ENCODE measurements at regions of chr11 and their contacts with region 1.

Region 1: GRCh38 chr11:126310228-126310991 is 6.5 kb downstream of the DCPS start:
- DNase-seq: peak; percentile 74 to 79
- ATAC-seq: peak; percentile 91 to 95 (median 92)
- H3K4me3 ChIP-seq: no peak overlapping the region
- H3K27ac ChIP-seq: peak overlapping the region in 3 of 10 donors; percentile 3 to 71 (median 27)
- H3K4me1 ChIP-seq: peaks cover 0 to 40% (median 7%) of the 10 kb centered on the region in 9 donors
- H3K27me3 ChIP-seq: no peaks in the 10 kb centered on the region
- CTCF ChIP-seq: peak; percentile 83 to 97 (median 90)

Region 2: GRCh38 chr11:126072141-126072741 is 238.2 kb before region 1 on chr11:
- intact Hi-C with region 1: no loop called
- DNase-seq: no peak
- ATAC-seq: no peak
- H3K4me3 ChIP-seq: no peak overlapping the region
- H3K27ac ChIP-seq: no peak overlapping the region
- H3K4me1 ChIP-seq: no peaks in the 10 kb centered on the region
- H3K27me3 ChIP-seq: peaks cover 0 to 6% (median 0%) of the 10 kb centered on the region in 7 donors
- CTCF ChIP-seq: no peak

Region 3: GRCh38 chr11:126391970-126392639 is 81.7 kb after region 1 on chr11:
- intact Hi-C with region 1: loop called in 3 of 10 experiments (anchors 2 to 5 kb)
- DNase-seq: peak in 1 of 2 donors; percentile 56
- ATAC-seq: peak; percentile 41 to 67 (median 54)
- H3K4me3 ChIP-seq: peak overlapping the region in 2 of 10 donors; percentile 3 to 17
- H3K27ac ChIP-seq: peak overlapping the region; percentile 40 to 87 (median 80)
- H3K4me1 ChIP-seq: peaks cover 16 to 83% (median 58%) of the 10 kb centered on the region in 9 donors
- H3K27me3 ChIP-seq: no peaks in the 10 kb centered on the region
- CTCF ChIP-seq: peak in 6 of 9 donors; percentile 29 to 58 (median 39)

Region 4: GRCh38 chr11:126431401-126432064 is 121.1 kb after region 1 on chr11:
- intact Hi-C with region 1: loop called in 7 of 10 experiments (anchors 5 to 10 kb)
- DNase-seq: peak; percentile 57 to 64
- ATAC-seq: peak; percentile 52 to 84 (median 74)
- H3K4me3 ChIP-seq: no peak overlapping the region
- H3K27ac ChIP-seq: peak overlapping the region; percentile 43 to 87 (median 72)
- H3K4me1 ChIP-seq: peaks cover 12 to 74% (median 30%) of the 10 kb centered on the region in 9 donors
- H3K27me3 ChIP-seq: no peaks in the 10 kb centered on the region
- CTCF ChIP-seq: no peak

Region 5: DNA sequence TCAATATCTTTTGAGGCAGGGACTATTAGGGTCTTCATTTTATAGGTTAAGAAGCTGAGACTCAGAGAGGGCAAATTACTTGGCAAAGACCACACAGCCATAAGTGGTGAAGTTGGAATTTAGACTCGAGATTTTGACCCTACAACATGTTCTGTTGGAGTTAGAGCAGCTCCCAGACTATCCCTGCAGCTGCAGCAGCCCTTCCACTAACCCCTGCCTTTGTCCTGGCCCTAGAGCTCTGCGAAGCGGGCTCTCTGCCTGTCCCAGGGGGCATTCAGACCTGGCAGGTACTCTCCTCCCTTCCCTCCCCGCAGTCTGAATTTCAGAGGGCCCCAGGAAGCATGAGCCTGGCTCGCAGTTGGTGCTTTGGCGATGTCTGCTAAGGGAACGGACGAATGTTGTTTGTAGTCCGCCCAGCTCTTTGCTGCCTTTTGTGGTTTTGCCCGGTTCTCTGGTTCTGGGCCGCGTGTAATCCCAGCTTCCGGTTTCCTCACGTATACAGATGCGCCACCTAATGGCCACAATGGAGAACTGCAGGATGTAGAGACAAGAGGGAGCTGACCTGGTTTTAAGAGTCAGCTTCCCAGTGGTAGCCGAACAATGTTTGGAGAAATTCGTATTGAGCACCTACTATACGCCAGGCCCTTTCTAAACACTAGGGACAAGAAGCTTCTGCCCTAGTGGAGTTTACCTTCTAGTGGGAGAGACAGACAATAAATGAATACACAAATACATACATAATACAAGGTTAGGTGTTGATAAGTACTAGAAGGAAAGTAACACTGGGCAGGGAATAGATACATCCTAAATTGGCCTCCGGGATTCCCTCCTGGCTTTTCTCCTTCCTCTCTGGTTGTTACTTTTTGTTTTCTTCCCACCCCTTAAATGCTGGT is 170.2 kb after region 1 on chr11:
- intact Hi-C with region 1: loop called (anchors 1 to 5 kb)
- DNase-seq: peak; percentile 68 to 87
- ATAC-seq: peak; percentile 80 to 91 (median 88)
- H3K4me3 ChIP-seq: peak overlapping the region in 3 of 10 donors; percentile 12 to 18 (median 17)
- H3K27ac ChIP-seq: peak overlapping the region in 8 of 10 donors; percentile 17 to 77 (median 56)
- H3K4me1 ChIP-seq: peaks cover 0 to 13% (median 5%) of the 10 kb centered on the region in 9 donors
- H3K27me3 ChIP-seq: no peaks in the 10 kb centered on the region
- CTCF ChIP-seq: peak; percentile 87 to 98 (median 95)

Measured in heart right ventricle (tissue), 16 donors.